A673 (cell line): ENCODE measurements at regions of chr6 and their contacts with region 1.

Region 1: DNA sequence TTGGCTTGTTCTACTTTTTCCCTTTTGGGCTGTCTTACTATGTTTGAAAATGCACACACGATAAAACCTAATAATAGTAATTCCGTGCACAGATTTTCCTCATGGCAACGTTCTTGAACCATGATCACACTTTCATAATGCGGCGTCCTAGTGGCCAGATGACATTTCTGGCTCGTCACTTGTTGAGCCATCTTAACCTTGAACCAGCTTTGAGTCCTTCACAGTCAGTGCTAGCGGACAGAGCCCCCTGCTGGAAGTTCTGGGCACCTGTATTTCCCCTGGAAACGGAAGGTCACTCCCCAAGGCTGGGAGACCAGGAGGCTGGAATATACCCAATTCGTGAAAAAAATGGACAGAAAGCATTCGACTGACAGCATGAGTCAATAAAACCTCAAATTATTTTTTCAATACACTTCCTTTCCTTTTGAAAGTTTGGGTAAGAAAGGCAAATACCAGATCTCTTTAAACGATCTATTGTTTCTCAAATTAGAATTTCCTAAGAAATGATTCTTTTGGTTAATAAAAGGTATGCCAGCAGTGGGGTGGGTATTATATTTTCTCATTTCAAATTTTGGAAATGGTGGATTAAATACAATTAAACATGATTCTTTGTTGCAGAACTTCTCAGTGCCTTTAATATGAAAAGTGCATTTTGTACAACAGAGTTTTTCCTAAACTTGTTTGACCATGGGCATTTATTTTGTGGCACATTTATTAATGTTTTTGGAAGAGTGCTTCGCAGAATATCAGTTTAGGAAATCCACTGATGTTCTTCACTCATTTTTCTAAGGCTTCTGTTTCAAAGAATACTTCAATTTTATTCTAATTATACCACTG is 542.3 kb downstream of the QKI start:
- DNase-seq: peak; percentile 81
- H3K4me3 ChIP-seq: no peak overlapping the region
- H3K27ac ChIP-seq: no peak overlapping the region
- H3K4me1 ChIP-seq: no peaks in the 10 kb centered on the region
- H3K27me3 ChIP-seq: no peaks in the 10 kb centered on the region
- CTCF ChIP-seq: peak; percentile 94

Region 2: DNA sequence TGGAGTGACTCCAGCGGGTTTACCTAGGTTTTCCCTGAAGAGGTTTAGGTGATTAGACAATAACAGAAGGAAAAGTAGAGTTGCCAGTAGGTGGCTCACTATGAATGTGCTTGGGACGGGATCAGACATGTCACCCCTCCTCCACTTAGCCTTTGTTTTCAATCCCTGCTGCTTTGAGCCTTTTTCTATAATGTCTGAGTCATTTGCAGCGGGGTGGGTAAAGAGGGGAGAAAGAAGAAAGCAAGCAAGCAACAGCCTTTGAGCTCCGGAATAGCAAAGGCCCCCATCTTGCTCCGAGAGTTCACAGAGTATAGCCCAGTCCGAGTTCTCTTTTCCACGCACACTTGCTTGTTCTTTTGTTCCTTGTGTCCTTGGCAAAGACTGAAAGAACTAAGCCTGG is 1099.9 kb before region 1 on chr6:
- CTCF ChIA-PET with region 1: no interaction called
- POLR2A ChIA-PET with region 1: no interaction called
- intact Hi-C with region 1: loop called (anchors 5 kb)
- DNase-seq: peak; percentile 87
- H3K4me3 ChIP-seq: peak overlapping the region; percentile 35
- H3K27ac ChIP-seq: peak overlapping the region; percentile 66
- H3K4me1 ChIP-seq: peaks cover 9% of the 10 kb centered on the region
- H3K27me3 ChIP-seq: no peaks in the 10 kb centered on the region
- CTCF ChIP-seq: peak; percentile 61

Region 3: GRCh38 chr6:163170294-163170883 is 786.4 kb before region 1 on chr6:
- CTCF ChIA-PET with region 1: interaction called, 5 read pairs
- POLR2A ChIA-PET with region 1: no interaction called
- intact Hi-C with region 1: loop called (anchors 10 kb)
- DNase-seq: peak; percentile 53
- H3K4me3 ChIP-seq: no peak overlapping the region
- H3K27ac ChIP-seq: no peak overlapping the region
- H3K4me1 ChIP-seq: no peaks in the 10 kb centered on the region
- H3K27me3 ChIP-seq: no peaks in the 10 kb centered on the region
- CTCF ChIP-seq: peak; percentile 85

Region 4: GRCh38 chr6:163585932-163586437 is 370.8 kb before region 1 on chr6:
- CTCF ChIA-PET with region 1: no interaction called
- POLR2A ChIA-PET with region 1: no interaction called
- intact Hi-C with region 1: loop called (anchors 5 kb)
- DNase-seq: peak; percentile 93
- H3K4me3 ChIP-seq: no peak overlapping the region
- H3K27ac ChIP-seq: peak overlapping the region; percentile 41
- H3K4me1 ChIP-seq: peaks cover 38% of the 10 kb centered on the region
- H3K27me3 ChIP-seq: no peaks in the 10 kb centered on the region
- CTCF ChIP-seq: no peak

Region 5: GRCh38 chr6:164927288-164928056 is 970.7 kb after region 1 on chr6:
- CTCF ChIA-PET with region 1: no interaction called
- POLR2A ChIA-PET with region 1: no interaction called
- intact Hi-C with region 1: loop called (anchors 10 kb)
- DNase-seq: peak; percentile 65
- H3K4me3 ChIP-seq: no peak overlapping the region
- H3K27ac ChIP-seq: no peak overlapping the region
- H3K4me1 ChIP-seq: no peaks in the 10 kb centered on the region
- H3K27me3 ChIP-seq: no peaks in the 10 kb centered on the region
- CTCF ChIP-seq: peak; percentile 94